A673 (cell line): ENCODE measurements at regions of chr17 and their contacts with region 1.

Region 1: GRCh38 chr17:8079291-8080207 is 8.0 kb downstream of the ALOX12B start:
- DNase-seq: peak; percentile 80
- H3K4me3 ChIP-seq: peak overlapping the region; percentile 53
- H3K27ac ChIP-seq: no peak overlapping the region
- H3K4me1 ChIP-seq: no peaks in the 10 kb centered on the region
- H3K27me3 ChIP-seq: peaks cover 12% of the 10 kb centered on the region
- CTCF ChIP-seq: peak; percentile 94

Region 2: DNA sequence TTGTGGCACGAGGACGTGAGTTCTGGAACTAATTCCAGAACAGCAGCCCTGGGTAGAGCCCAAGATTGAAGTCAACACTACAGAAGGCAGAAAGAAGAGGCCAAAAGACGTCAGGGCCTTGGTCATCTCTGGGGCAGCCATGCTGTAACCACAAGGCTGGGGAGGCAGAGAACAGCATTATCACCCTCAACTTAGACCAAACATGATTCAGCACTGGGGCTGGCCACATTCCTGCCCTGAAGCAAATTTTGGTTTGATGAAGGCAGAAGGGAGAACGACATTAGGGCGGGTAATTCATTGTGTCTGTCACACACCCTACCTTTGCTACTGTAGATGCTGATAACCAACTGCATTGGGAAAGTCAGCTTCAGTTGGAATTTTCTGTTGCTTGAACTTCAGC is 50.4 kb before region 1 on chr17:
- CTCF ChIA-PET with region 1: no interaction called
- POLR2A ChIA-PET with region 1: no interaction called
- intact Hi-C with region 1: no loop called
- DNase-seq: no peak
- H3K4me3 ChIP-seq: no peak overlapping the region
- H3K27ac ChIP-seq: no peak overlapping the region
- H3K4me1 ChIP-seq: no peaks in the 10 kb centered on the region
- H3K27me3 ChIP-seq: no peaks in the 10 kb centered on the region
- CTCF ChIP-seq: no peak

Region 3: GRCh38 chr17:8162233-8162996 is 82.9 kb after region 1 on chr17 and contains the start of gene VAMP2:
- CTCF ChIA-PET with region 1: no interaction called
- POLR2A ChIA-PET with region 1: no interaction called
- intact Hi-C with region 1: no loop called
- DNase-seq: peak; percentile 80
- H3K4me3 ChIP-seq: peak within 1 kb of the TSS; percentile 100
- H3K27ac ChIP-seq: peak within 1 kb of the TSS; percentile 97
- H3K4me1 ChIP-seq: peaks cover 32% of the 10 kb centered on the region
- H3K27me3 ChIP-seq: no peaks in the 10 kb centered on the region
- CTCF ChIP-seq: no peak
- total RNA-seq, gene VAMP2: 41.3 and 51.0 TPM in 2 replicates

Region 4: GRCh38 chr17:8300627-8301242 is 221.2 kb after region 1 on chr17:
- CTCF ChIA-PET with region 1: no interaction called
- POLR2A ChIA-PET with region 1: no interaction called
- intact Hi-C with region 1: loop called (anchors 5 kb)
- DNase-seq: peak; percentile 83
- H3K4me3 ChIP-seq: no peak overlapping the region
- H3K27ac ChIP-seq: no peak overlapping the region
- H3K4me1 ChIP-seq: no peaks in the 10 kb centered on the region
- H3K27me3 ChIP-seq: no peaks in the 10 kb centered on the region
- CTCF ChIP-seq: peak; percentile 87